Tibial artery (tissue), 4 donors: ENCODE measurements at regions of chr12 and their contacts with region 1.

Region 1: GRCh38 chr12:56593909-56594621 is 36.1 kb downstream of the BAZ2A start:
- DNase-seq: peak; percentile 45 to 77
- H3K4me3 ChIP-seq: no peak overlapping the region
- H3K27ac ChIP-seq: peak overlapping the region; percentile 58 to 60
- H3K4me1 ChIP-seq: peaks cover 0 to 13% (median 4%) of the 10 kb centered on the region in 4 donors
- H3K27me3 ChIP-seq: no peaks in the 10 kb centered on the region
- CTCF ChIP-seq: peak; percentile 70 to 71

Region 2: DNA sequence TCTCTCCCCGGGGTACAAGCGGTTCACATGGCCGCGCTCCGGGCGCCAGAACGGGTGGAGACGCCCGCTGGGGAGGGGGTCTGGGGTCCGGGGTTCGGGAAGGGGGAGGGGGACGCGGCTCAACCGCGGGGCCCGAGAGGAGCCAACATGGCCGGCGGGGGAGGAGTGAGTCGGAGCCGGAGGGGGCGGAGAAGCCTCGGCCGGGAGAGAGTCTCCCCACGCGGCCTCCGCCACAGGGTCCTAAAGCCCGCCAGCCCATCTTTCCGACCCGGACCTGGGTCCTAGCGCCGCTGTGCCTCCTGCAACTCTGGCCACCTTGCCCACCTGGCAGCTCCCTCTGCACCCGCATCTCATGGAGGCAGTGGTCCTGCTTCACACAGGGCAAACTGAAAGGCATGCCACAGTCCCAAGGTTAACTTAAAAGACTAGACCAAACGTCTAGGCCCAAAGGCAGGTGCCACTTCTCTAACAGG is 36.1 kb after region 1 on chr12 and contains the start of gene BAZ2A:
- intact Hi-C with region 1: loop called (anchors 5 kb)
- DNase-seq: peak; percentile 87 to 92
- H3K4me3 ChIP-seq: peak within 1 kb of the TSS; percentile 79 to 87
- H3K27ac ChIP-seq: peak within 1 kb of the TSS; percentile 88 to 90
- H3K4me1 ChIP-seq: peaks cover 0 to 70% (median 65%) of the 10 kb centered on the region in 4 donors
- H3K27me3 ChIP-seq: no peaks in the 10 kb centered on the region
- CTCF ChIP-seq: no peak

Region 3: DNA sequence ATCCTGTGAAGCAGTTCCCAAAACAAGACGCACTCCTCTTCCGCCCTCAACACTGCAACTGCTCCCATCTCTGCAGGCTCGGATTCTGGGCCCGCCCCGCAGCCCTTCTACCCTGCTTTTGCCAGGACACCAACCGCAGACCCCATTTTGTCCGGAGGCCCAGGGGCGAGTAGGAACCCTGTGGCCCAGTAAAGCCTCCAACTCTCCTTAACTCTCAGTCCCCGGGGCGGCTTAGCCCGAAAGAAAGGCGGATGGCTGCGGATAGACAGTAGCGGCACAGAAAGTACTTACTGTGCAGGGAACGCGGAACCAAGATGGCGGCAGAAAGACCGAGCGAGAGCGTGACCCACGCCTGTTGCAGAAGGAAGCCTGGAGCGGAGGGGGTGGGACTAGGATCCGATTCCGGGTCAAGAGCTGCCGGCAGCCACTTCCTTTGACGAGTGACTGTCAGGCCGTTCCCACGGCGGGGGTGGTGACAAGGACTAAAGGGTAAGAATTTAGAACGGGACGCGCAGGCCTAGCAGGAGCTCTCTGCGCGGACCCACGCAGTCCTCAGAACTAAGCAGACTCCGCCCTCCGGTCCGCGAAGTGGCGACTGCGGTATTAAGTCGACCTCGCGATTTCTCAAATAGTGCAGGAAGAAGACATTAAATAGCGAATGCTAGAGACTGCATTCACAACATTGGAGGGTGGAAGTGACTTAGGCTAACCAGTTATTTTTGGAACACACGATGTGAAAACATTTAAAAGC is 131.1 kb after region 1 on chr12 and contains the start of gene NACA:
- intact Hi-C with region 1: no loop called
- DNase-seq: peak; percentile 99 to 100
- H3K4me3 ChIP-seq: peak within 1 kb of the TSS; percentile 63 to 75
- H3K27ac ChIP-seq: peak within 1 kb of the TSS; percentile 80 to 88
- H3K4me1 ChIP-seq: peaks cover 0 to 50% (median 37%) of the 10 kb centered on the region in 4 donors
- H3K27me3 ChIP-seq: no peaks in the 10 kb centered on the region
- CTCF ChIP-seq: no peak